HEK293 (cell line): ENCODE measurements at regions of chr17 and their contacts with region 1.

Region 1: DNA sequence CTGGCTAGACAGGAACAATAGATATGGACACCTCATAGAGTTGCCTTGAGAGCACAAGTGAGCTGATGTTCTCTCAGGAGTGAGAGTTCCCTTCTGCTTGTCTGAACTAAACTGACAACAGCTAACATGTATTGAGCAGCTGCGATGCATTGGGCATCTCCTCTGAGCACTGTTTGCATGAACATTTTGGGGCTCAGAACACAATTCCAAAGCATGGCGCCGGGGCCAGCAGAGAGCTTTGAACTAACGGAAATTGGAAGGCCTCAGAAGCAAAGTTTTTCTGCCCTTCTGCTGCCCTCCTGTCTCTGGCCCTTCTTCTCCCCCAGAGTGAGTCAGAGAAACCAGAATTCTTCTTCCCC is 38.1 kb downstream of the TRPV2 start:
- H3K4me3 ChIP-seq: no peak overlapping the region
- H3K27ac ChIP-seq: no peak overlapping the region
- H3K4me1 ChIP-seq: no peaks in the 10 kb centered on the region
- CTCF ChIP-seq: no peak

Region 2: DNA sequence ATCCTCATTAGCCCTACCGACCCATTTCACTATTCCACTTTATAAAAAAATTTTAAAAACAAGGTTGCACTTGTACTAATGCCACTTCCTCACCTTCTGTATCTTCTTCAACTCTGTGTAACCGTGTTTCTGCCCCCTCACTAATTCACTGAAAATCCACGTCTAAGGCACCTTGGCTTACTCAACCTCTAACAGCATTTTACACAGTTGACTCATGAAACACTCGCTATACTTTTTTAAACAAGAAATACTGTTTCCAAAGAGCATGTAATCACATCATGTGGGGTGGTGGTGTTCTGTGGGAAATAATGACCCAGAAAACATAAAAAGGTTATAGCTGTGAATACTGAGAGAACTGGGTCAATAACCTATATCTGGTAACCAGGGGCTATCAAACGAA is 318.0 kb before region 1 on chr17:
- CTCF ChIA-PET with region 1: no interaction called
- POLR2A ChIA-PET with region 1: no interaction called
- H3K4me3 ChIP-seq: no peak overlapping the region
- H3K27ac ChIP-seq: no peak overlapping the region
- H3K4me1 ChIP-seq: no peaks in the 10 kb centered on the region
- CTCF ChIP-seq: no peak

Region 3: DNA sequence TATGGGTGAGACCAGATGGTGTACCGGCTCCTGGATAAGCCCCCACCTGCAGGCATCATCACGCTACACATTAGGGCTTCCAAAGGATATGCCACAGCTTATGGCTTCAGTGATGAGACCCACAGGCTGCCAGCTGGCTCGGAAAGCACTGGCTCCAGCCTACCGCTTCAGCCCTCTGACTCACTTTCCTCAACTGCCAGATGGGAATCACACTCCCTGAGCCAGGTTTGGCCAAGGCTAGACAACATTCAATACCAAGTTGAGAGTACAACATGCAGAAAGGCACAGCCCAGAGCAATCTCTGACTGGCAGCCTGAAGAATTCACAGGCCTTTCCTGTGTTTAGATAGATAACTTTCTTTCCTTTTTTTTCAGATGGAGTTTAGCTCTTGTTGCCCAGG is 110.5 kb before region 1 on chr17:
- CTCF ChIA-PET with region 1: no interaction called
- POLR2A ChIA-PET with region 1: no interaction called
- H3K4me3 ChIP-seq: no peak overlapping the region
- H3K27ac ChIP-seq: no peak overlapping the region
- H3K4me1 ChIP-seq: no peaks in the 10 kb centered on the region
- CTCF ChIP-seq: no peak

Region 4: GRCh38 chr17:16470265-16470664 is 16.8 kb after region 1 on chr17:
- CTCF ChIA-PET with region 1: interaction called, 22 read pairs
- POLR2A ChIA-PET with region 1: no interaction called
- H3K4me3 ChIP-seq: no peak overlapping the region
- H3K27ac ChIP-seq: no peak overlapping the region
- H3K4me1 ChIP-seq: no peaks in the 10 kb centered on the region
- CTCF ChIP-seq: no peak

Region 5: DNA sequence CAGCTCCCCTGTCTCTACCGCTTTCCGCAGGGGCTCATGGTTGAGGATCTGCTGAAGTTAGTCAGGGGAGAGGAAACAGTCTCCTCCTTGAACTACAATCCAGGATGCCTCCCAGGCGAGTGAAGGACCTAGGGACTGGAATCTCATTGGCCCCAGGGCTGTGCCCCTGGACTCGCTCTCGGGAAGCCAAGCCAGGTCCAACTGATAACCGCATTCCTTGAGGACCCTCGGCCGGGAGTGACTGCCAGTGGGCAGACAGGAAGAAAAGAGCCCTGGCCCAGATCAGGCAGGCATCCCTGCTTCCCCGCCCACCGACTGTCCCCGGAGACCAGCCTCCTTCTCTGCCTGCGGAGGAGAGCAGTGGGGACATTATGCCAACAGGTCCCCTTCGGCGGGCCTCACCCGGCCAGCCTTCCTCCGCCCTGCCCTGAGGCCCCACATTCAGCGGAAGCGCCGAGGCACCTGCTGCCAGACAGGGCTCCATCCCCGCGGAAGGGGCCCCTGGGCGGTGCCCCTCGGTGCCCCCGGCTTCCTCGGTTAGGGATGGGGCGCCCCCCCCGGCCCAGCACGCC is 37.7 kb after region 1 on chr17:
- CTCF ChIA-PET with region 1: interaction called, 18 read pairs
- POLR2A ChIA-PET with region 1: no interaction called
- H3K4me3 ChIP-seq: peak overlapping the region; percentile 50
- H3K27ac ChIP-seq: peak overlapping the region; percentile 22; the same call in 1 of the 2 replicates
- H3K4me1 ChIP-seq: peaks cover 13% of the 10 kb centered on the region
- CTCF ChIP-seq: no peak

Region 6: DNA sequence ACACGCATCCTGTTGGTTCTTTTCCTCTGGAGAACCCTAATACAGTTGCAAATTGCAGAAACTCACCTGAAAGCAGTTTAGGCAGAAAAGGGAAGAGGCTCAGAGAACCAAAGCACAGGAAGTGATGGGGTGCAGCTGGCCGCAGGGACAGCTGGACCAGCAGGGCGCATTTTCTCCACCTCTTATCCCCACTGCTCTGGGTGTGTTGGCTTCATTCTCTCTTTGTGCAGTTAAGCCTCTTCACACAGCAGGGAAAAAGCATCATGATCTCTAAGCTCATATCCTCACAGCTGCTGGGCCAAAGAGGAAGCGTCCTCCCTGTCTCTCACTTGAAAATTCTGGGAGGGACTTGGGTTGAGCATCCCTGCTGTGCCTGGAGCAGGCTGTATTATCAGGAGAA is 58.5 kb after region 1 on chr17:
- CTCF ChIA-PET with region 1: interaction called, 261 read pairs
- POLR2A ChIA-PET with region 1: interaction called, 3 read pairs
- H3K4me3 ChIP-seq: no peak overlapping the region
- H3K27ac ChIP-seq: no peak overlapping the region
- H3K4me1 ChIP-seq: peaks cover 2% of the 10 kb centered on the region; the same call in 1 of the 2 replicates
- CTCF ChIP-seq: no peak

Region 7: GRCh38 chr17:16537130-16537458 is 83.6 kb after region 1 on chr17:
- CTCF ChIA-PET with region 1: interaction called, 26 read pairs
- POLR2A ChIA-PET with region 1: no interaction called
- H3K4me3 ChIP-seq: no peak overlapping the region
- H3K27ac ChIP-seq: no peak overlapping the region
- H3K4me1 ChIP-seq: peaks cover 4% of the 10 kb centered on the region
- CTCF ChIP-seq: no peak